MCF 10A (cell line): ENCODE measurements at regions of chr11 and their contacts with region 1.

Region 1: GRCh38 chr11:96342961-96343711 is at the start of gene MAML2:
- DNase-seq: peak; percentile 93
- H3K4me3 Mint-ChIP-seq: peak within 1 kb of the TSS; percentile 95
- H3K27ac Mint-ChIP-seq: peak within 1 kb of the TSS; percentile 94
- H3K4me1 Mint-ChIP-seq: peaks cover 35% of the 10 kb centered on the region
- H3K27me3 Mint-ChIP-seq: no peaks in the 10 kb centered on the region
- CTCF ChIP-seq: peak; percentile 97
- total RNA-seq, gene MAML2: 5.3 and 8.6 TPM in 2 replicates

Region 2: GRCh38 chr11:95877291-95877690 is 465.8 kb before region 1 on chr11:
- CTCF ChIA-PET with region 1: no interaction called
- POLR2A ChIA-PET with region 1: no interaction called
- intact Hi-C with region 1: loop called (anchors 1 kb)
- DNase-seq: peak; percentile 80
- H3K4me3 Mint-ChIP-seq: no peak overlapping the region
- H3K27ac Mint-ChIP-seq: no peak overlapping the region
- H3K4me1 Mint-ChIP-seq: peaks cover 12% of the 10 kb centered on the region
- H3K27me3 Mint-ChIP-seq: no peaks in the 10 kb centered on the region
- CTCF ChIP-seq: no peak

Region 3: DNA sequence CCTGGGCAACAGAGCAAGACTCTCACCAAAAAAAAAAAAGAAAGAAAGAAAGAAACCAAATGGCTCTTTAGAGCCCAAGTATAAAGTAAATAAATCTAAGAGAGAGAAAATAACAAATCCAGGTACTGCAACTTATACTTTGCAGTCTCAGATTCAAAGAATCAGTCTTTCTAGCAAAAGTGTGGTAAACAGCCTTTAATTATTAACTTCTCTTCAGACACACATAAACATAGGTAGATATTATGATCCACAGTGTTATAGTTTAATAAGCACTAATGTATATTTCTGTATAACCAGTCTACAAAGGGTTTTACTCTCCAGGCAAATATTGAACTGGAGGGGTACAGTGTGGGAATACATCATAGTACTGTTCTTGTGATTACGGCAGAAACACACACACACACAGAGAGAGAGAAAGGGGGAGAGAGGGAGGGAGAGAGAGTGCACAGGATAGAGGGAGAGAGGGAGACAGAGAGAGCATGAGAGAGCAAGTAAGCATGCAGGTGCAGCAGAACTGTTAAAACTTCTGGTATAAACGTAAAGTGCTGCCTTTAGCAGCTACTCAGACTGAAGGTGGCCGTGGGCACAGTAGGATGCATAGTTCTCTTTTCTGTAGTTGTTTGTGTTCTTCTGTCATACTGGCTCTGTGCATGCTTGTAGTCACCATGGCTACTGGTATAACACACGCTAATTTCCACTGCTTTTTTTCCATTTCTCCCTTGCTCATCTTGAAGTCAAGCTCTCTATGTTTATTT is 451.5 kb before region 1 on chr11:
- CTCF ChIA-PET with region 1: no interaction called
- POLR2A ChIA-PET with region 1: no interaction called
- intact Hi-C with region 1: no loop called
- DNase-seq: no peak
- H3K4me3 Mint-ChIP-seq: no peak overlapping the region
- H3K27ac Mint-ChIP-seq: no peak overlapping the region
- H3K4me1 Mint-ChIP-seq: peaks cover 10% of the 10 kb centered on the region
- H3K27me3 Mint-ChIP-seq: no peaks in the 10 kb centered on the region
- CTCF ChIP-seq: no peak

Region 4: GRCh38 chr11:96062134-96062533 is 281.0 kb before region 1 on chr11:
- CTCF ChIA-PET with region 1: interaction called, 200 read pairs
- POLR2A ChIA-PET with region 1: interaction called, 7 read pairs
- intact Hi-C with region 1: no loop called
- DNase-seq: no peak
- H3K4me3 Mint-ChIP-seq: no peak overlapping the region
- H3K27ac Mint-ChIP-seq: no peak overlapping the region
- H3K4me1 Mint-ChIP-seq: no peaks in the 10 kb centered on the region
- H3K27me3 Mint-ChIP-seq: no peaks in the 10 kb centered on the region
- CTCF ChIP-seq: no peak

Region 5: DNA sequence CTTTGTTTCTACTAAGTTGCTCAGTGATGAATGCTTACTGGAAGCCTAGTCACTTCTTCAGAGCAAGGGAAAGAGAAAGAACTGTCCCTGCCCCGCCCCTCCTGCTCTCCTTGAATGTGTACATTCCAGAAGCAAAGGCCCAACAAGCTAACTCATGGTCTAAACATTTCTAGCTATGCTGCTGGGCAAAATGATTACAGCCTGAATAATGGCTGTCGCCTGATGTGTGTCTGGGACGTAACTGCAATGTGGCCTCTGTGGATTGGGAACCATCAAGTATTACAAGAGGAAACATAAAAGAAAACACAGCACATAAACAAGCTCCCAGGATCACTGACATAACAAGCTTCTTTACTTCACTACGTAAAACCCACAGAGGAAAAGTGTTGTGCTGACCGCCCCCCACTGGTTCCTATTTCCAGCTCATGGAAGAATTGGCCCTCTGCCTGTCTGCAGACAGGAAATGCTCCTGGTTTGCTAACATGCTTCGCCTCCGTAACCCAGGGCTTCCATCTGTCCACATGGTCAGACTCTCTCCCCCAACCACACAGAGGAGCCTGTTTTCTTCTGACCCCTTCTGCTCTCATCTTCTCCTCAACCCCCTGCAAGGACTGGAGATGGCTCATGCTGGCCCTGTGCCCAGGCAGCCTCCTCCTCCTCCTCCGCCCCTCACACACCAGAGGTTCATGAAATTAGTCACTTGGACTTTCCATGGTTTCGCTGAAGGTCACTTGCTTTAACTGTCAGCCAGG is 187.3 kb before region 1 on chr11:
- CTCF ChIA-PET with region 1: interaction called, 5 read pairs
- POLR2A ChIA-PET with region 1: interaction called, 3 read pairs
- intact Hi-C with region 1: loop called (anchors 1 kb)
- DNase-seq: peak; percentile 93
- H3K4me3 Mint-ChIP-seq: peak overlapping the region; percentile 51
- H3K27ac Mint-ChIP-seq: peak overlapping the region; percentile 88
- H3K4me1 Mint-ChIP-seq: peaks cover 29% of the 10 kb centered on the region
- H3K27me3 Mint-ChIP-seq: no peaks in the 10 kb centered on the region
- CTCF ChIP-seq: peak; percentile 28

Region 6: GRCh38 chr11:96242971-96243647 is 100.0 kb before region 1 on chr11:
- CTCF ChIA-PET with region 1: interaction called, 86 read pairs
- POLR2A ChIA-PET with region 1: interaction called, 169 read pairs
- intact Hi-C with region 1: loop called (anchors 1 kb)
- DNase-seq: peak; percentile 97
- H3K4me3 Mint-ChIP-seq: peak overlapping the region; percentile 72
- H3K27ac Mint-ChIP-seq: peak overlapping the region; percentile 83
- H3K4me1 Mint-ChIP-seq: peaks cover 32% of the 10 kb centered on the region
- H3K27me3 Mint-ChIP-seq: no peaks in the 10 kb centered on the region
- CTCF ChIP-seq: no peak

Region 7: GRCh38 chr11:96324960-96325359 is 18.2 kb before region 1 on chr11:
- CTCF ChIA-PET with region 1: interaction called, 5 read pairs
- POLR2A ChIA-PET with region 1: interaction called, 20 read pairs
- intact Hi-C with region 1: no loop called
- DNase-seq: no peak
- H3K4me3 Mint-ChIP-seq: peak overlapping the region; percentile 44
- H3K27ac Mint-ChIP-seq: peak overlapping the region; percentile 83
- H3K4me1 Mint-ChIP-seq: peaks cover 32% of the 10 kb centered on the region
- H3K27me3 Mint-ChIP-seq: no peaks in the 10 kb centered on the region
- CTCF ChIP-seq: no peak